IMR-90 (cell line): ENCODE measurements at regions of chr6 and their contacts with region 1.

Region 1: GRCh38 chr6:52937908-52938307 is 28.4 kb upstream of the GSTA3 start:
- DNase-seq: no peak
- ATAC-seq: no peak
- H3K4me3 ChIP-seq: no peak overlapping the region
- H3K27ac ChIP-seq: no peak overlapping the region
- H3K4me1 ChIP-seq: no peaks in the 10 kb centered on the region
- H3K27me3 ChIP-seq: 0 out of 2 replicates have a peak, but pooled peaks cover 3% of the 10 kb centered on the region
- CTCF ChIP-seq: no peak
- POLR2A ChIP-seq: no peak
- RAD21 ChIP-seq: no peak

Region 2: GRCh38 chr6:52984247-52984646 is 46.3 kb after region 1 on chr6:
- CTCF ChIA-PET with region 1: no interaction called
- POLR2A ChIA-PET with region 1: no interaction called
- dilution Hi-C with region 1: no loop called
- in situ Hi-C with region 1: no loop called
- intact Hi-C with region 1: loop called (anchors 5 kb)
- DNase-seq: no peak
- ATAC-seq: no peak
- H3K4me3 ChIP-seq: no peak overlapping the region
- H3K27ac ChIP-seq: no peak overlapping the region
- H3K4me1 ChIP-seq: no peaks in the 10 kb centered on the region
- H3K27me3 ChIP-seq: no peaks in the 10 kb centered on the region
- CTCF ChIP-seq: no peak
- POLR2A ChIP-seq: no peak
- RAD21 ChIP-seq: no peak

Region 3: DNA sequence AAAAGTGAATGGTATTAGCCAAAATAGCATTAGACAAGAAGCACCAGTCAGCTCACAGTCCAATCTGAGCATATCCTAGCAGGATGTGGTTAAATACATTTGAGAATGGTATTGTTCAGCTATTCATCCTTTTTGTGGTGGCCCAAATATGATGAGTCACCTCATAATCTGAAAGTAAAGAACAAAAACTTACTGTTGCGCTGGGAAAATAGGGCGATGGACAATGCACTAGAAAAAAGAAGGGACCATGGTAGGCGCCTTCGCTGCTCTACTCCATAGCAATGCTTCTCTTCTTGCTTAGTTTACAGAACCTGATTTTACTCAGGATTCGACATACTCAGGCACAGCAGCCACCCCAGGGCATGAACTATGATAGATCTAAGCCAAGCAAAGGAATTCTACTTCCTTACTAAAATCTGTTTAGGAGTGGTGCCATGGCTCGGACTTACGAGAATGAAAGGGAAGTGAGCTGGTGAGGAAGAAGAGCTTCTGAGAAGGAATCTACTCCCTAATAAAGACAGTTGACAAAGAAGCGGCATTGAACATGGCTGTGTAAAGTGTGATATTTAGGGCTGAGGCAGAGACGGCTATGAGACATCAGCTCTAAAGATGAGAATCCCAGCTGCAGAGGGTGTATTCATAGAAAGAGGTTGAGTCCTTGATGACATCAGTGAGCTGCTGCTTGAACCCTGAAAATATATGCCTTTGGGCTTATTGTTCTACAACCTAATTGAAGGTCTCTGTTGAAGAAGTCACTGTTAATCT is 110.7 kb after region 1 on chr6:
- CTCF ChIA-PET with region 1: no interaction called
- POLR2A ChIA-PET with region 1: no interaction called
- dilution Hi-C with region 1: no loop called
- in situ Hi-C with region 1: no loop called
- intact Hi-C with region 1: no loop called
- DNase-seq: peak; percentile 91
- ATAC-seq: peak; percentile 49
- H3K4me3 ChIP-seq: no peak overlapping the region
- H3K27ac ChIP-seq: peak overlapping the region; percentile 5; the same call in 1 of the 2 replicates
- H3K4me1 ChIP-seq: peaks cover 17% of the 10 kb centered on the region
- H3K27me3 ChIP-seq: no peaks in the 10 kb centered on the region
- CTCF ChIP-seq: no peak
- POLR2A ChIP-seq: 0 out of 2 replicates have a peak, but pooled peaks have one; percentile 19
- RAD21 ChIP-seq: no peak

Region 4: GRCh38 chr6:53322188-53323029 is 384.5 kb after region 1 on chr6:
- CTCF ChIA-PET with region 1: no interaction called
- POLR2A ChIA-PET with region 1: no interaction called
- dilution Hi-C with region 1: no loop called
- in situ Hi-C with region 1: no loop called
- intact Hi-C with region 1: loop called (anchors 5 kb)
- DNase-seq: peak; percentile 42
- ATAC-seq: 0 out of 2 replicates have a peak, but pooled peaks have one; percentile 3
- H3K4me3 ChIP-seq: no peak overlapping the region
- H3K27ac ChIP-seq: no peak overlapping the region; the same call in 1 of the 2 replicates
- H3K4me1 ChIP-seq: peaks cover 28% of the 10 kb centered on the region
- H3K27me3 ChIP-seq: no peaks in the 10 kb centered on the region
- CTCF ChIP-seq: no peak
- POLR2A ChIP-seq: no peak
- RAD21 ChIP-seq: no peak